Cardiac septum (tissue), 1 donor: ENCODE measurements at regions of chr15 and their contacts with region 1.

Region 1: GRCh38 chr15:99104788-99105513 is at the start of gene SYNM:
- DNase-seq: peak; percentile 86
- total RNA-seq, gene SYNM: 395 TPM

Region 2: GRCh38 chr15:98856218-98856907 is 248.6 kb before region 1 on chr15:
- intact Hi-C with region 1: no loop called
- DNase-seq: no peak

Region 3: GRCh38 chr15:99019558-99020540 is 85.1 kb before region 1 on chr15:
- intact Hi-C with region 1: no loop called
- DNase-seq: no peak

Region 4: GRCh38 chr15:99169769-99170311 is 64.9 kb after region 1 on chr15:
- intact Hi-C with region 1: loop called (anchors 1 kb)
- DNase-seq: no peak

Region 5: DNA sequence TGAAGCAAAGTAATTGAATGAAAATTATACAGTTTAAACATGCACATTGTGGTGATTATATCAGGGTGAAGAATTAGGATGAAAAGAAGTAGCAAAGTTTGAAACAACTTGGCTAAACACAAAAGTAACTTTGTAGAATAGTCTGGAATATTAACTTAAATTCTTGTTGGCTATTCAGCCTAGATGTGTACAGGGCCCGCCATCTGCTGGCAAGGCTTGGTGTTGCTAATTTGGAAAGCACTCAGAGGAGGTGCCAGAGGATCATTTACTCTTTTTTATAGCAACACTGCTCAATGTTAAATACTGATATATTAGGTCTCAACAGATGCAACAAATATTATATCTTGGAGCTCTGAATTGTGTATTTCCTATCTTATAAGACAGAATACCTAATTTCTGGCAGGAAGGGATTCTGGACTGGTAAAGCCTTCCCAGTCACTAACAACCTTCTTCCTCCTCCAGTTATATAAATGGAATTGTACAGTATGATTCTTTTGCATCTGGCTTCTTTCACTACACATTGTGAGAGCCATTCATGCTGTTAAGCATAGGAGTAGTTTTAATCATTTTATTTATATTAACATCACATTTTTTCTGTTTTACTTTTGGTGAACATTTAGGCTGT is 108.3 kb after region 1 on chr15:
- intact Hi-C with region 1: loop called (anchors 1 kb)
- DNase-seq: peak; percentile 90

Region 6: DNA sequence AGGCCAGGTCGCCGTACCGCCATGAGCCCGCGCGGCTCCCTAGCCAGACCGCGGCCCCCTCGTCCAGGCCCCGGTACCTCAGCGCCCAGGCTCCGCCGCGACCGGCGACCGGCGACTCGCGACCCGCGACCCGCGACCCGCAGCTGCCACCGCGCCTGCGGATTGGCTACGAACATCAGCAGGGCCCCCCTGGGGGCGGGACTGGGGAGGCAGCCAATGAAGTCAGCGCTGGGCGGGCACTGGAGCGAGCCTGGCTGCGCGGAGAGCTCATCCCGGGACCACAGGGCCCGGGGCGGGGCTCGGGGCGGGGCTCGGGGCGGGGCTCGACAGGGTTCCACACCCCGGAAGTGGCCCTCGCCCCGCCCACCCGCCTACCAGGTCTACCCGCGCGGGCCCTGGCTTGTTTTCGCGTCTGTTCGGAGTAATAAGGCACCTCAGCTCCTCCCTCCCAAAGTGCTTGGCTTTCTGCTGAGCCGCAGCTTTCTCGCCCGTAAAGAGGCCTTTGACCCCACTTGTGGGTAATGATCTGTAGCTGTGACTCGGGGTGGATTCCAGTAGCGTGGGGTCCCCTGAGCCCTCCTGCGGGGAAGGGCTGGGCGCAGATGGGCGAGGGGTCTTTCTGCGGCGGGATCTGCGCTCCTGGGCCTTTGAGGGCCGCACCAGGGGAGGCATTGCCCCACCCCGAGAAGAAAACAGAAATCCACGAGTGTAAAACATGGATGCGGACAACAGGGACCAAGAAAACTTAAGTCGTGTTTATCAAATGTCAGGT is 628.5 kb after region 1 on chr15 and contains the start of gene LYSMD4:
- intact Hi-C with region 1: loop called (anchors 10 kb)
- DNase-seq: peak; percentile 99
- total RNA-seq, gene LYSMD4: 12.7 TPM